H1 (cell line): ENCODE measurements at regions of chr17 and their contacts with region 1.

Region 1: GRCh38 chr17:16987830-16988601 is 16.1 kb upstream of the TNFRSF13B start:
- DNase-seq: no peak
- H3K4me3 ChIP-seq: no peak overlapping the region
- H3K27ac ChIP-seq: no peak overlapping the region
- H3K4me1 ChIP-seq: peaks cover 0 to 2% (median under 1%) of the 10 kb centered on the region in 4 experiments; a peak in 2 of 7 replicates
- H3K27me3 ChIP-seq: no peaks in the 10 kb centered on the region; a peak in 1 of 7 replicates
- CTCF ChIP-seq: no peak
- EP300 ChIP-seq: no peak
- POLR2A ChIP-seq: no peak
- RAD21 ChIP-seq: no peak

Region 2: DNA sequence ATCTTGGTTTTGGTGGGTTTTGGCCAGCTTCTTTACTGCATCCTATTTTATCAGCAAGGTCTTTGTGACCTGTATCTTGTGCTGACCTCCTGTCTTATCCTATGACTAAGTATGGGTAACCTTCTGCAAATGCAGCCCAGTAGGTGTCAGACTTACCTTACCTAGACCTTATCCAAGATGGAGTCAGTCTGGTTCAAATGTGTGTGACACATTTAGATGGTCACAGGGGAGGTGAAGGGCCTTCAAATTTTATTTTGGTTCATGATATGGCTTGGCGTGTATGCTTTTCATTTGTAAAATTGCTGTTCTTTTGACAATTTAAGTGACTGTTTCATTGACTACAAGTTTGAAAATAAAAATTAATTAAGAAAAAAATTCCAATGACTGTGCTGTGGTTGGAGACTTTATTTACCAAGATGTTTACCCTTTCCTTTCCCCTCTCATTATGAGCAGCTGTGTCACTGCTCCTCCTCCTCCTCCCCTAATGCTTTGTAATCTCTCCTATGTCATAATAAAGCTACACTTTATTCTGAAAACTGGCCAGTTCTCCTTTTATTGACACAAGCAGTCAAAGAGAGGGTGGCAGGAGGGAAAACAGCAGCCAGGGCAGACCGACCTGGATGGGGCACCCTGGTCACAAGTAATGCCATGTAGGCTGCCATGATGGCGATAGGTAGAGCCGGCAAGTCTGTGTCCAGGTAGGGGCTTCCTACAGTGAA is 65.5 kb before region 1 on chr17:
- CTCF ChIA-PET with region 1: interaction called, 19 read pairs
- POLR2A ChIA-PET with region 1: no interaction called
- DNase-seq: no peak
- H3K4me3 ChIP-seq: no peak overlapping the region
- H3K27ac ChIP-seq: no peak overlapping the region
- H3K4me1 ChIP-seq: peaks cover 0 to 4% (median 0%) of the 10 kb centered on the region in 4 experiments; a peak in 1 of 7 replicates
- H3K27me3 ChIP-seq: no peaks in the 10 kb centered on the region
- CTCF ChIP-seq: peak in 1 of 3 experiments; percentile 3; a peak in 1 of 4 replicates
- EP300 ChIP-seq: no peak
- POLR2A ChIP-seq: no peak
- RAD21 ChIP-seq: peak; percentile 39 to 40

Region 3: DNA sequence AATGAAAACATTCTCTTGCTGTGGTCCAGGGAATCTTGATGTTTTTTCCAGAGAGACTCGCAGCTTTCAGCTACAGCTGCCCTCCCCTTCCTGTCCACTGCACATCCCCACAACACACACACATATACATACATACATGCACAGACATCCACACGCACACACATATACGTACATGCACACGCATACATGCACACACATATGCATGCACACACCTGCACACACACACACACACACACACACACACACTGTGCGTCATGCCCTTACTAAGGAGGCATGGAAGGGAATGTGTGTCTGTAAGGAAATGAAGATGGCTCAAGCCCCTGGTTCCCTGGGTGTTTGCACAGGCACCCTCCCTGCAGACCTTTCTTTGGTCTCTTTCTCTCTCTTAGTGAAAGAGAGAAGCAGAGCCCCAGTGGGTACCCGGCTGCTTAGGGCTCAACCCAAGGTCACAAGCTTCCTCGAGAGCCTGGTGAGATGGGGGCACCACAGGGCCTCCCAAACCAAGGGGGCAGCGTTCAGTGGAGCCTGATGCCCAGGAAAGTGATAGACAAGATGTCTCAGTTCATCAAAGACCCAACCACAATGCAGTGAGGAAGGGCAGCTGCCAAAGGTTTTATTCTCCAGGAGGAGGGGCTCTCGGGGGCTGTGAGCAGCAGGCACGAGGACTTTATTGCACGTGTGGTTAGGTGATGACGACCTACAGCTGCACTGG is 49.4 kb before region 1 on chr17:
- CTCF ChIA-PET with region 1: interaction called, 15 read pairs
- POLR2A ChIA-PET with region 1: no interaction called
- DNase-seq: no peak
- H3K4me3 ChIP-seq: no peak overlapping the region
- H3K27ac ChIP-seq: no peak overlapping the region
- H3K4me1 ChIP-seq: peaks cover 1 to 14% (median 5%) of the 10 kb centered on the region in 4 experiments; a peak in 5 of 7 replicates
- H3K27me3 ChIP-seq: no peaks in the 10 kb centered on the region
- CTCF ChIP-seq: no peak
- EP300 ChIP-seq: no peak
- POLR2A ChIP-seq: no peak
- RAD21 ChIP-seq: no peak

Region 4: DNA sequence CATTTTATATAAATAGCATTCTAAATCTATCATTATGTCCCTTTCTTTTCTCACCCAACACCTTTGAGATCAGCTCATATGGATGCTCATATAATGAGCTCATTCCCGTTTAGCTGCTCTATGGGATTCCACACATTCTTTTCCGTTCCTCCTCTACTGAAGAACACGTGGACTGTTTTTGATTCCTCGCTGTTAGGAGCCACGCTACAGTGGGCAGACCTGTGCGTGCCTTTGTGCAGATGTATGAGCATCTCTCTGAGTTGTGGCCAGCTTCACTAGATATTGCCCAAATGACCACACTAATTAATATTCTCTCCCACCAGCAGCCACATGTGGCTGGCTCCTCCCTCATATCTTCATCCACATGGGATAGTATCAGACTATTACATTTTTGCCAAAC is 10.1 kb before region 1 on chr17:
- CTCF ChIA-PET with region 1: interaction called, 17 read pairs
- POLR2A ChIA-PET with region 1: interaction called, 4 read pairs
- DNase-seq: peak in 1 of 2 experiments; percentile 17
- H3K4me3 ChIP-seq: no peak overlapping the region
- H3K27ac ChIP-seq: no peak overlapping the region
- H3K4me1 ChIP-seq: no peaks in the 10 kb centered on the region; a peak in 2 of 7 replicates
- H3K27me3 ChIP-seq: no peaks in the 10 kb centered on the region
- CTCF ChIP-seq: no peak
- EP300 ChIP-seq: no peak
- POLR2A ChIP-seq: no peak
- RAD21 ChIP-seq: no peak

Region 5: GRCh38 chr17:17001076-17001777 is 13.2 kb after region 1 on chr17:
- CTCF ChIA-PET with region 1: interaction called, 12 read pairs
- POLR2A ChIA-PET with region 1: interaction called, 3 read pairs
- DNase-seq: no peak
- H3K4me3 ChIP-seq: no peak overlapping the region
- H3K27ac ChIP-seq: no peak overlapping the region
- H3K4me1 ChIP-seq: peaks cover 0 to 4% (median 0%) of the 10 kb centered on the region in 4 experiments; a peak in 1 of 7 replicates
- H3K27me3 ChIP-seq: no peaks in the 10 kb centered on the region
- CTCF ChIP-seq: no peak
- EP300 ChIP-seq: no peak
- POLR2A ChIP-seq: no peak
- RAD21 ChIP-seq: no peak